GM10248 (cell line): ENCODE measurements at regions of chr12 and their contacts with region 1.

Region 1: DNA sequence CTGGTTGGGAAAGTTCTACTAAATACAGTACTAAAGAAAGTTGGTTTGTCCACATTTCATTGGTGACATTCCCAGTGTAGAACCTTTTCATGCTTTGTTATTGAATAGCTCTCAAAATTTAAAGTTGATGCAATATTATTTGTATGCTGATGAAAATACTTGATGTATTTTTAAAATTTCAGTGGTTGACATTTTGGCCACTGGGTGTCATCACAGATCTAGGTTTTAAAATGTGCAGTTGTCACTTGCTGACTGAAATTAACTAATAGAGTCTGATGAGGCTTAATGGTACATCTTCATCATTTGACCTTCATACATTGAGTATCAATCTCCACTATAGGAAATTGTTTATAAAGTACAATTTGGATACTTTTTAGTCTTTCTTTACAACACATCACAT is 37.1 kb downstream of the CMAS start:
- DNase-seq: no peak
- CTCF ChIP-seq: peak; percentile 34

Region 2: GRCh38 chr12:22069856-22070565 is 13.2 kb before region 1 on chr12:
- CTCF ChIA-PET with region 1: interaction called, 25 read pairs
- POLR2A ChIA-PET with region 1: no interaction called
- DNase-seq: no peak
- CTCF ChIP-seq: no peak